ENCODE measurements at regions of chr10 and their contacts with region 1.

Region 1: DNA sequence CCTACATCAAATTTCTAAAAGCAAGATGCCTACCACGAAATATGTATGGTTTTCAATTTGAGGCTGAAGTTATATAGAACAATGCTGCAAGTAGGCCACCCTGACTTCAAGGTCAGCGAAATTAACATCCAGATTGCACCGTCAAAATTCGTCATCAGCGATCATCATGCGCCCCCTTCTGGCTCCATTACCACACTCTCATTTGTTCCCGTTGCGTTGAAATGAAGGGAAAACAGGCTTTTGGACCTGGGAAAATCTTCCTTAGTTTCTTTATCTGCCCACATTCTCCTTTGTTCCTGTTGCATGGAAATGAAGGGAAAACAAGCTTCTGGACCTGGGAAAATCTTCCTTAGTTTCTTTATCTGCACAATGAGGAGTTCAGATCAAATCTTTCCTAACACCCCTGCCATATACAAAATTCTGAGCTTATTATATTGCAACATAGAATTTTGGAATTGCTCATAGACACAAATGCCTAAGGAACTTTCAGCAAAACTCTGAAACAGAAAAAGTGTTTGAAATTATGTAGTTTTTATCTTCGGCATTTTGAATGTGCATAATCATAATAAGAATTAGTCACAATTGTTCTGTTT is 98.2 kb upstream of the PRKCQ start:
- DNase-seq: peak; percentile 34 to 68 (median 53)
- H3K4me3 ChIP-seq: no peak overlapping the region
- H3K4me3 Mint-ChIP-seq: no peak overlapping the region
- H3K27ac ChIP-seq: no peak overlapping the region
- H3K27ac Mint-ChIP-seq: peak overlapping the region in 1 of 8 donors; percentile 43
- H3K4me1 ChIP-seq: no peaks in the 10 kb centered on the region
- H3K4me1 Mint-ChIP-seq: peaks cover 4 to 5% (median 5%) of the 10 kb centered on the region in 3 donors
- H3K27me3 ChIP-seq: no peaks in the 10 kb centered on the region
- H3K27me3 Mint-ChIP-seq: peaks cover 3 to 39% of the 10 kb centered on the region in 2 donors

Region 2: DNA sequence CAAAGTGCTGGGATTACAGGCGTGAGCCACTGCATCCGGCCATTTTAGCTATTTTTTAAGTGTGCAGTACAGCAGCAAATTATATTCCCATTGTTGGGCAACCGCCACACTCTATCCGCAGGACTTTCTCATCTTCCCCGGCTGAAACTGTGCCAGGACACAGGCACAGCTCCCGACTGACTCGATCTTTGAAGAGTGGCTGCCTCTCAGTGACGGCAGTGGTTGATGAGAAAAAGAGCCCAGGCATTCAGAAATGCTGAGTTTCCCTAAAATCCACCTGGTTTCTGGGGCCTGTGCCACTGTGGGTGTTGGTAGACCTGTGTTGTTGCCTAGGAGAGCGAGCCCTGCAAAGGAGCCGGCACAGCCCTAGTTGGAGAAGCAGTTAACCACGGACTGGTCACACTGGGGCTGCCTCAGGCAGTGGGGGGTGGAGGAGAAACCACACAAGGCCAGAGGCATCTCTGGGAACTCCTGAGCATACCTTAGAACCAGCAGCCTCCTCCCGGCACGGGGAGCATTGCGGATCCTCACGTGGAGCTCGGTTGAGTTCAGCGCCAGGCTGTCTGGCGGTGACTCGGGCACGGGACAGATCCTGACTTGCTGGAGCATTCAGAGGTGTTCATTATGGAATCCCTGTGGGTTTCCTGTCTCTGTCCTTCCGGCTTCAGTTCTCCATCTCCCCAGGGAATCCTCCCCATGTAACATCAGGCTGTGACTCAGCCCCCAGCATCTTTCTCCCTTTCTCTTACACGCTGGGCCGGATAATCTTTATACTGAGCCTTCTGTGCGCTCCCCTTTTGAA is 459.4 kb before region 1 on chr10:
- CTCF ChIA-PET with region 1: no interaction called
- POLR2A ChIA-PET with region 1: no interaction called
- DNase-seq: no peak
- H3K4me3 ChIP-seq: no peak overlapping the region
- H3K4me3 Mint-ChIP-seq: no peak overlapping the region
- H3K27ac ChIP-seq: no peak overlapping the region
- H3K27ac Mint-ChIP-seq: no peak overlapping the region
- H3K4me1 ChIP-seq: no peaks in the 10 kb centered on the region
- H3K4me1 Mint-ChIP-seq: peaks cover under 1 to 4% (median 3%) of the 10 kb centered on the region in 3 donors
- H3K27me3 ChIP-seq: no peaks in the 10 kb centered on the region
- H3K27me3 Mint-ChIP-seq: no peaks in the 10 kb centered on the region

Region 3: DNA sequence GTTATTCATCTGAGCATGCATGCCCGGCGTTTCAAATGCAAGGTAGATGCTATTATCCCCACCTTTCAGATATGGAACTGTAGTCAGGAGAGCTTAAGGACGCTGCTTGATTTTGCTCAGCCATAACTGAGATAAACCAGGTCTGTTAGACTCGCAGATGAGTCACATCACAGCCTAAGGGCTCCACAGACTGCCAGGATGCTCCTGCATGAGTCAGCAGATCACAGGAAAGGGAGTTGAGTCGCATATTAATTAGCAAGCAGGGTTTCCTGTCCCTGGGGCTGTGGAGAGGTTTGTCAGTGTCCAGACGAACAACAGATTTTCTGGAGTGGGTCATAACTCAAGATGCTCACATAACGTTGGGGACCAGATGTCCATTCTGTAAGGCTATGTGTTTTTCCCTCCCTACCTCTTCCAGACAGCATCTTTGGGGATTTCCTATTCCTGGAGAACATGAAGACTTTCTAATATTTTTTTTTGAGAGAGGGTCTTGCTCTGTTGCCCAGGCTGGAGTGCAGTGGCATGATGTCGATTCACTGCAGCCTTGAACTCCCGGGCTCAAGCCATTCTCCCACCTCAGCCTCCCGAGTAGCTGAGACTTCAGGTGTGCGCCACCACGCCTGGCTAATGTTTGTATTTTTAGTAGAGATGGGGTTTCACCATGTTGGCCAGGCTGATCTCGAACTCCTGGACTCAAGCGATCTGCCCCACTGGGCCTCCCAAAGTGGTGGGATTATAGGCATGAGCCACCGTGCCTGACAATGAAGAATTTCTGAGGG is 438.9 kb before region 1 on chr10:
- CTCF ChIA-PET with region 1: no interaction called
- POLR2A ChIA-PET with region 1: no interaction called
- DNase-seq: peak in 4 of 5 donors; percentile 15 to 71 (median 18)
- H3K4me3 ChIP-seq: no peak overlapping the region
- H3K4me3 Mint-ChIP-seq: no peak overlapping the region
- H3K27ac ChIP-seq: no peak overlapping the region
- H3K27ac Mint-ChIP-seq: peak overlapping the region in 6 of 8 donors; percentile 1 to 73 (median 54)
- H3K4me1 ChIP-seq: no peaks in the 10 kb centered on the region
- H3K4me1 Mint-ChIP-seq: peaks cover 8 to 24% (median 9%) of the 10 kb centered on the region in 3 donors
- H3K27me3 ChIP-seq: no peaks in the 10 kb centered on the region
- H3K27me3 Mint-ChIP-seq: no peaks in the 10 kb centered on the region

Region 4: GRCh38 chr10:6409971-6410651 is 268.2 kb before region 1 on chr10:
- CTCF ChIA-PET with region 1: interaction called, 21 read pairs
- POLR2A ChIA-PET with region 1: no interaction called
- DNase-seq: peak; percentile 30 to 76 (median 47)
- H3K4me3 ChIP-seq: peak overlapping the region; percentile 16
- H3K4me3 Mint-ChIP-seq: peak overlapping the region; percentile 63 to 83 (median 79)
- H3K27ac ChIP-seq: peak overlapping the region; percentile 52
- H3K27ac Mint-ChIP-seq: peak overlapping the region; percentile 94 to 98 (median 96)
- H3K4me1 ChIP-seq: peaks cover 29% of the 10 kb centered on the region
- H3K4me1 Mint-ChIP-seq: peaks cover 26 to 50% (median 46%) of the 10 kb centered on the region in 3 donors
- H3K27me3 ChIP-seq: no peaks in the 10 kb centered on the region
- H3K27me3 Mint-ChIP-seq: peaks cover 0 to 1% of the 10 kb centered on the region in 2 donors

Region 5: GRCh38 chr10:6416892-6417512 is 261.3 kb before region 1 on chr10:
- CTCF ChIA-PET with region 1: interaction called, 21 read pairs
- POLR2A ChIA-PET with region 1: no interaction called
- DNase-seq: peak in 2 of 5 donors; percentile 39 to 49
- H3K4me3 ChIP-seq: no peak overlapping the region
- H3K4me3 Mint-ChIP-seq: no peak overlapping the region
- H3K27ac ChIP-seq: no peak overlapping the region
- H3K27ac Mint-ChIP-seq: no peak overlapping the region
- H3K4me1 ChIP-seq: no peaks in the 10 kb centered on the region
- H3K4me1 Mint-ChIP-seq: no peaks in the 10 kb centered on the region
- H3K27me3 ChIP-seq: no peaks in the 10 kb centered on the region
- H3K27me3 Mint-ChIP-seq: no peaks in the 10 kb centered on the region

Region 6: GRCh38 chr10:6729071-6729774 is 50.9 kb after region 1 on chr10:
- CTCF ChIA-PET with region 1: no interaction called
- POLR2A ChIA-PET with region 1: no interaction called
- DNase-seq: no peak
- H3K4me3 ChIP-seq: no peak overlapping the region
- H3K4me3 Mint-ChIP-seq: no peak overlapping the region
- H3K27ac ChIP-seq: no peak overlapping the region
- H3K27ac Mint-ChIP-seq: no peak overlapping the region
- H3K4me1 ChIP-seq: no peaks in the 10 kb centered on the region
- H3K4me1 Mint-ChIP-seq: no peaks in the 10 kb centered on the region
- H3K27me3 ChIP-seq: peaks cover 14% of the 10 kb centered on the region
- H3K27me3 Mint-ChIP-seq: peaks cover 21 to 78% of the 10 kb centered on the region in 2 donors

Measured in CD8-positive, alpha-beta memory T cell (primary cell).